Activated CD4-positive, alpha-beta memory T cell treated with anti-CD3 and anti-CD28 coated beads for 36 hours (primary cell): ENCODE measurements at regions of chr1 and their contacts with region 1.

Region 1: GRCh38 chr1:28248283-28249012 is 10.9 kb upstream of the SESN2 start:
- DNase-seq: peak; percentile 92
- H3K4me3 Mint-ChIP-seq: peak overlapping the region; percentile 85
- H3K27ac Mint-ChIP-seq: peak overlapping the region; percentile 91
- H3K4me1 Mint-ChIP-seq: peaks cover 46% of the 10 kb centered on the region
- H3K27me3 Mint-ChIP-seq: no peaks in the 10 kb centered on the region

Region 2: DNA sequence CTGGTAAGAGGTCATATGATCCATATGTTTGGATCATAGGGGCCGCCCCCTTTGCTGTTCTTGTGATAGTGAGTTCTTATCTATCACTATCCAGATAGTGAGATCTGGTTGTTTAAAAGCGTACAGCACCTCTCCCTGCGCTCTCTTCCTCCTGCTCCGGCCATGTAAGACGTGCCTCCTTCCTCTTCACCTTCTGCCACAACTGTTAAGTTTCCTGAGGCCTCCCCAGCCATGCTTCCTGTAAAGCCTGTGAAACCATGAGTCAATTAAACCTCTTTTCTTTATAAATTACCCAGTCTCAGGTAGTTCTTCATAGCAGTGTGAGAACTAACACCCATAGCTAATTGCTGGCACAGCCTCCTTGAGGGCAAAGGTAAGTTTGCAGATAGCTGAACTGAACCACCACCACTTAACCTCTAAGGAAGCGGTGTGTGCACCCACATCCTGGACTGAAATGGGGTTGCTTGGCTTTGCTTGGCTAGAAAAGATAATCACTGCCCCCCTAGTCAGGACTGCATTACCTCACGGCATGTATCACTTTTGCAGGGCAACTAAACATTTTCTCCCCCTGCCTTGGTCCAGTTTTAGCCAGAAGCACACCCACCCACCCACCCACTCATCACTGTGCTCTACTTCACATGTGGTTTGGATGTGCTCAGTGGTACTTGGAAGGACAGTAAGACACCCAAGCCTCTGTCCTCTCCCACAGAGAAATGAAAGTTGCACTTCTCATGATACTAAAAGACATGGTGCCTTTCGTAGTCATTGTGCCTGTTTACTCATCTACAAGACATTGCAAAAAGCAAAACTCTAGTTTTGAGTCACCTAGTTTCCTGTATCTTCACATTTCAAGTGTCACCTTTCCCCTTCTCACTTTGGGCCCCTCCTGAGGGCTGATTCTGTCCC is 48.9 kb before region 1 on chr1:
- CTCF ChIA-PET with region 1: no interaction called
- POLR2A ChIA-PET with region 1: interaction called, 3 read pairs
- intact Hi-C with region 1: loop called (anchors 2 kb)
- DNase-seq: peak; percentile 89
- H3K4me3 Mint-ChIP-seq: peak overlapping the region; percentile 28
- H3K27ac Mint-ChIP-seq: peak overlapping the region; percentile 87
- H3K4me1 Mint-ChIP-seq: peaks cover 41% of the 10 kb centered on the region
- H3K27me3 Mint-ChIP-seq: no peaks in the 10 kb centered on the region

Region 3: DNA sequence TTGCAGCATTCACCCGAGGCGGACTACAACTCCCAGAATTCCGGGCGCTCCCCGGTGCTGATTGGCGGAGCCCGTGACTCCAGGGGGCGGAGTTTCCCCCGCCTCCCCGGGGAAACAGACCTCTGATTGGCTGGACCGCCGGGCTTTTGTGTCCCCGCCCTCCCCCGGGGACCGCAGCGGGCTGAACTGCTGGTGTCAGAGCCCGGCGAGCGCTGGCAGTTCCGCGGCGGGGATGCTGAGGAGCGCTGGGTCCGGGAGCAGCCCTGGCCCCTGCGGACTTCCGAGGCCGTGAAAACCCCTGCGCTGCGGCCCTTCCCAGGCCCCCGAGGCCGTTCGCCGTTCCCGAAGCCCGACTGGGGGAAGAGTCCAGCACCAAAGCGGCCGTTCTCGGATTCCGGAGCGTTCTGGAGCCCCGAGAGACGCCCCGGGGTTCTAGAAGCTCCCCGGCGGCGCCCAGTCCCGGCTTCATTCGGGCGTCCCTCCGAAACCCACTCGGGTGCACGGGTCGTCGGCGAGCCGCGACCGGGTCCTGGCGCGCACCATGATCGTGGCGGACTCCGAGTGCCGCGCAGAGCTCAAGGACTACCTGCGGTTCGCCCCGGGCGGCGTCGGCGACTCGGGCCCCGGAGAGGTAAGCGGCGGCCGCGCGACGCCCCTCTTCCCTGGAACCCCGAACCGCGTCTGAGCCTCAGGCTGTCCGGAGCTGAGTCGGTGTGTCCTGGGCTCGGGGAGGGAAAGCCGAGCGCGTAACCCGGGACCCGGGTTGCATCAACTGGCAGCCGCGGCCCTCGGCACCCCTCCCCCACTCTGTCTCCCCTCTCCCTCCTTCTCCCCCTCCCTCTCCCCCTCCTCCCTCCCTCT is 11.1 kb after region 1 on chr1 and contains the start of gene SESN2:
- CTCF ChIA-PET with region 1: interaction called, 61 read pairs
- POLR2A ChIA-PET with region 1: interaction called, 61 read pairs
- intact Hi-C with region 1: loop called (anchors 1 kb)
- DNase-seq: peak; percentile 100
- H3K4me3 Mint-ChIP-seq: peak within 1 kb of the TSS; percentile 74
- H3K27ac Mint-ChIP-seq: peak within 1 kb of the TSS; percentile 84
- H3K4me1 Mint-ChIP-seq: peaks cover 45% of the 10 kb centered on the region
- H3K27me3 Mint-ChIP-seq: no peaks in the 10 kb centered on the region
- total RNA-seq, gene SESN2: 23.4 to 24.1 TPM

Region 4: DNA sequence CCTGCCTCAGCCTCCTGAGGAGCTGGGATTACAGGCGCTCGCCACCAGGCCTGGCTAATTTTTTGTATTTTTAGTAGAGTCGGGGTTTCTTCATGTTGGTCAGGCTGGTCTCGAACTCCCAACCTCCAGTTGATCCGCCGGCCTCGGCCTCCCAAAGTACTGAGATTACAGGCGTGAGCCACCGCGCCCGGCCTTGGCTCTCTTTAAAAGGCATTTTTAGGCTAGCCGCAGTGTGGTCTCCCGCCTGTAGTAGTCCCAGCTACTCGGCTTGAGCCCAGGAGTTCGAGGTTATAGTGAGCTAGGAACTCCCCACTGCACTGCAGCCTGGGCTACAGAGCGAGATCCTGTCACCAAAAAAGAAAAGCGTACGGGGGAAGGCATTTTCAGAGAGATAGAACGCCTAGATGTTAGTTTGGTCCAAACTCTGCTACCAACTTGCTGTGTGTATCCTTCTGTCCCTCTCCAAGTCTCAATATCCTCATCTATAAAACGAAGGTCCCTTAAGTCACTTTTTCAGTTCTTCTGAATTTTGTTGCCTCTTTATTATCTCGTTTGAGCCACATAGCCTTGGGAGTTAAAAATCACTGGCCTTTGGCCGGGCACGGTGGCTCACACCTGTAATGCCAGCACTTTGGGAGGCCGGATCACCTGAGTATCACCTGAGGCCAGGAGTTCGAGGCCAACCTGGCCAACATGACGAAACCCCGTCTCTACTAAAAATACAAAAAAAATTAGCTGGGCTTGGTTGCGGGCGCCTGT is 81.1 kb after region 1 on chr1:
- CTCF ChIA-PET with region 1: interaction called, 50 read pairs
- POLR2A ChIA-PET with region 1: interaction called, 32 read pairs
- intact Hi-C with region 1: loop called (anchors 1 kb)
- DNase-seq: peak; percentile 59
- H3K4me3 Mint-ChIP-seq: peak overlapping the region; percentile 93
- H3K27ac Mint-ChIP-seq: peak overlapping the region; percentile 96
- H3K4me1 Mint-ChIP-seq: peaks cover 28% of the 10 kb centered on the region
- H3K27me3 Mint-ChIP-seq: peaks cover 1% of the 10 kb centered on the region

Region 5: DNA sequence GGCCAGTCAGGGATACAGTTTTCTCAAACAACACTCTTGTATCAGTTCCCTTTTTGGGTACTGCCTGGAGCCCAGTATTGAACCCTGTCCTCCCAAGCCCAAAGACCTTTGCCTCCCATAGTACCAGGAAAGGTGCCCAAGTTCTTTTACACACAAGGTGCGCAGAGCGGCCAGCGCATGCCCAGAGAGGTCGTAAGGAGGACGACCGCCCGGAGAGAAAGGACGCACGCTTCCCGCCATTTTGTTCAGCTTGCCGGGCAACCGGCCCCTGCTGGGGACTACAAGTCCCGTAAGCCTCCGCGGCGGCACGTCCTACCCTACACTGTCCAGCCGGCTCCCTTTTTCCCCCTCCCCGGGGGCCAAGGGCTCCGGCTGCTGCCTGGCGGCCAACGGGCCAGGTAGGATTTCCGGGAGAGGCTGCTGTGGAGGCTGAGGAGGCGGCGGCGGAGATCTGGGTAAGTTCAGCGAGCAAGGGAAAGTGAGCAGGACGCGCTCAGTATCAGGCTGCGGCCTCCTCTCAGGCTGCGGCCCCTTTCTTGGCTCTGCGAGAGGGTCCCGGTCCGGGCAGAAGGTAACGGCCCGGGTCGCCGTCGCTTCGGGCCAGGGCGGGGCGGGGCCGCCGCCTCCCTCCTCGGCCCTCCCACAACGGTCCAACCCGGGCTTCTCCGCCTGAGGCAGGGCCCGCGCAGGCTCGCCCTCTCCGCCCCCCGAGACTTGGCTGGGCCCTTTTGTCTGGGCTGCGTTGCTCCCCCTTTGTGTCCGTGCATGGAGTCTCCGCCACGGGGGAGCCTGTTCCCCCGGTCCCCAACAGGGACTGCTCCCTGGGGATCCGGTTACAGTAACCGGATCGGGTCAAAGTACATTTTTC is 121.2 kb after region 1 on chr1 and contains the start of gene PHACTR4:
- CTCF ChIA-PET with region 1: interaction called, 11 read pairs
- POLR2A ChIA-PET with region 1: interaction called, 3 read pairs
- intact Hi-C with region 1: loop called (anchors 1 kb)
- DNase-seq: peak; percentile 90
- H3K4me3 Mint-ChIP-seq: peak within 1 kb of the TSS; percentile 94
- H3K27ac Mint-ChIP-seq: peak within 1 kb of the TSS; percentile 86
- H3K4me1 Mint-ChIP-seq: peaks cover 25% of the 10 kb centered on the region
- H3K27me3 Mint-ChIP-seq: no peaks in the 10 kb centered on the region
- total RNA-seq, gene PHACTR4: 19.5 to 21.5 TPM

Region 6: DNA sequence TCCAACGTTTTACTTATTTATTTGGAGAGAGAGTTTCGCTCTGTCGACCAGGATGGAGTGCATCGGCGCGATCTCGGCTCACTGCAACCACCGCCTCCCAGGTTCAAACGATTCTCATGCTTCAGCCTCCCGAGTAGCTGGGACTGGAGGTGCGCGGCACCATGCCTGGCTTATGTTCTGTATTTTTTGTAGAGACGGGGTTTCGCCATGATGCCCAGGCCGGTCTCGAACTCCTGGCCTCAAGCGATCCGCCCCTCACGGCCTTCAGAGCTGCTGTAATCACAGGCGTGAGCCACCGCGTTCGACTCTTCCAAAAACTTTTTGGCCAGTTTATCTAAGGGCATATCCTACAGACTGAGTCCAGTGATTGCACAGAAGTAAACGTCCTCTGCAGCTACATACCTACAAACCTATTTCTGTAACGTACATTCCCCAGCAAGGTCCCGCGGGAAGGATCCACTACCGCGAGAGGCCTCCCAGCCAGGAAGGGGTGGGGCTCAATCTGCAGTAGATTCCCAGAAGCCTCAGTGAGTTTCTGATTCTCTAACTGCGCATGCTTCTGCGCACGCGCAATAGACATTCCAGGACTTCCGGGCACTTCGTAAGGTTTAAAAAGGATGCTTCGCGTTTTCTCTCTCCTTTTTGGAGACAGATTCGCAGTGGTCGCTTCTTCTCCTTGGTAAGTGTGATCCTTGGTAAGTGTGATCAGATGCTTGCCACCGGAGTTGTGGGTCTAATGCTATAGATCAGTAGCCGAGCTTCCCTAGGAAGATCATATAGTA is 257.1 kb after region 1 on chr1 and contains the start of gene RCC1:
- CTCF ChIA-PET with region 1: interaction called, 13 read pairs
- POLR2A ChIA-PET with region 1: interaction called, 10 read pairs
- intact Hi-C with region 1: loop called (anchors 2 kb)
- DNase-seq: peak; percentile 98
- H3K4me3 Mint-ChIP-seq: peak within 1 kb of the TSS; percentile 97
- H3K27ac Mint-ChIP-seq: peak within 1 kb of the TSS; percentile 97
- H3K4me1 Mint-ChIP-seq: peaks cover 38% of the 10 kb centered on the region
- H3K27me3 Mint-ChIP-seq: peaks cover 6% of the 10 kb centered on the region
- total RNA-seq, gene RCC1: 83.5 to 86.1 TPM

Region 7: DNA sequence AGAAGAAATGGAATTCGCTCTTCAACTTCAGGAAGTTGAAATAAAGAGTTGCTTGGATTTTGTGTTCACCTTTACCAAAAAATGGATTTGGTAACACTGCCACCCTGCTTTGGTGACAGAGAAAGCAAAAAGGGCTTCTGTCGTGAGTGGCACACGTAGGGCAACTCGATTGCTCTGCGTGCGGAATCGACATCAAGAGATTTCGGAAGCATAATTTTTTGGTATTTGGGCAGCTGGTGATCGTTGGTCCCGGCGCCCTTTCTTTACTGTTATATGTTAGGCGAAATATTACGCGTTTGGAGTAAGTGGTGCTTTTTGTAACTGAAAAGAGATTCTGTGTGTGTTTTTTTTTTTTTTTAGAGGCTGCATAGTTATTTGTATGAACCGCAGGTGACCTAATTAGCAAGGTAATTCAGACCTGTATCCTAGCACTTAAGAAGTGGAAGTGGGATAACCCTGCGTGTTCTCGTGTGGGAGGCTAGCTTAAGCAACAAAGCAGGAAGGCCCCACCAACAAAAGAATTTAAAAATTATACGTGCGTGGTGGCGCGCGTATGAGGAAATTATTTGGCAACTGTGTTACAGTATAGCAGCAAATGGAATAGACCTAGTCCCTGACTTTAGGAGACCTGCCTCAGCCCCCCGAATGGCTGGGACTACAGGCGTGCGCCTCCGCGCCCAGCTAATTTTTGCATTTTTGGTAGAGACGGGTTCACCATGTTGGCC is 400.2 kb after region 1 on chr1 and contains the start of gene RNU11:
- CTCF ChIA-PET with region 1: no interaction called
- POLR2A ChIA-PET with region 1: interaction called, 9 read pairs
- intact Hi-C with region 1: loop called (anchors 5 kb)
- DNase-seq: peak; percentile 91
- H3K4me3 Mint-ChIP-seq: peak within 1 kb of the TSS; percentile 93
- H3K27ac Mint-ChIP-seq: peak within 1 kb of the TSS; percentile 99
- H3K4me1 Mint-ChIP-seq: peaks cover 27% of the 10 kb centered on the region
- H3K27me3 Mint-ChIP-seq: no peaks in the 10 kb centered on the region
- total RNA-seq, gene RNU11: not detected